CD8-positive, alpha-beta T cell (primary cell): ENCODE measurements at regions of chr22 and their contacts with region 1.

Region 1: GRCh38 chr22:36301384-36301828 is 48.5 kb downstream of the APOL1 start:
- DNase-seq: peak; percentile 67 to 92 (median 85)
- ATAC-seq: peak; percentile 94
- H3K4me3 ChIP-seq: no peak overlapping the region
- H3K4me3 Mint-ChIP-seq: no peak overlapping the region
- H3K27ac ChIP-seq: peak overlapping the region in 1 of 2 experiments; percentile 34
- H3K27ac Mint-ChIP-seq: peak overlapping the region; percentile 82
- H3K4me1 ChIP-seq: peaks cover 6% of the 10 kb centered on the region
- H3K4me1 Mint-ChIP-seq: peaks cover 9% of the 10 kb centered on the region
- H3K27me3 ChIP-seq: no peaks in the 10 kb centered on the region
- H3K27me3 Mint-ChIP-seq: no peaks in the 10 kb centered on the region
- CTCF ChIP-seq: peak; percentile 89

Region 2: GRCh38 chr22:36239401-36240171 is 61.8 kb before region 1 on chr22 and contains the start of gene APOL2:
- CTCF ChIA-PET with region 1: interaction called, 16 read pairs
- POLR2A ChIA-PET with region 1: no interaction called
- intact Hi-C with region 1: no loop called
- DNase-seq: peak; percentile 59 to 94 (median 87)
- ATAC-seq: peak; percentile 97
- H3K4me3 ChIP-seq: peak within 1 kb of the TSS; percentile 81 to 89
- H3K4me3 Mint-ChIP-seq: peak within 1 kb of the TSS; percentile 95
- H3K27ac ChIP-seq: peak within 1 kb of the TSS; percentile 69 to 92
- H3K27ac Mint-ChIP-seq: peak within 1 kb of the TSS; percentile 96
- H3K4me1 ChIP-seq: peaks cover 38% of the 10 kb centered on the region
- H3K4me1 Mint-ChIP-seq: peaks cover 50% of the 10 kb centered on the region
- H3K27me3 ChIP-seq: no peaks in the 10 kb centered on the region
- H3K27me3 Mint-ChIP-seq: no peaks in the 10 kb centered on the region
- CTCF ChIP-seq: peak; percentile 69
- total RNA-seq, gene APOL2: 17.4 to 18.2 TPM

Region 3: GRCh38 chr22:36286471-36287224 is 14.8 kb before region 1 on chr22:
- CTCF ChIA-PET with region 1: interaction called, 29 read pairs
- POLR2A ChIA-PET with region 1: interaction called, 3 read pairs
- intact Hi-C with region 1: no loop called
- DNase-seq: peak; percentile 38 to 81 (median 70)
- ATAC-seq: peak; percentile 71
- H3K4me3 ChIP-seq: no peak overlapping the region
- H3K4me3 Mint-ChIP-seq: no peak overlapping the region
- H3K27ac ChIP-seq: peak overlapping the region; percentile 10 to 26
- H3K27ac Mint-ChIP-seq: peak overlapping the region; percentile 82
- H3K4me1 ChIP-seq: peaks cover 35% of the 10 kb centered on the region
- H3K4me1 Mint-ChIP-seq: peaks cover 33% of the 10 kb centered on the region
- H3K27me3 ChIP-seq: no peaks in the 10 kb centered on the region
- H3K27me3 Mint-ChIP-seq: no peaks in the 10 kb centered on the region
- CTCF ChIP-seq: peak; percentile 84

Region 4: GRCh38 chr22:36317658-36318271 is 16.4 kb after region 1 on chr22:
- CTCF ChIA-PET with region 1: interaction called, 76 read pairs
- POLR2A ChIA-PET with region 1: interaction called, 3 read pairs
- intact Hi-C with region 1: no loop called
- DNase-seq: peak in 1 of 9 experiments; percentile 16
- ATAC-seq: no peak
- H3K4me3 ChIP-seq: no peak overlapping the region
- H3K4me3 Mint-ChIP-seq: no peak overlapping the region
- H3K27ac ChIP-seq: no peak overlapping the region
- H3K27ac Mint-ChIP-seq: no peak overlapping the region
- H3K4me1 ChIP-seq: no peaks in the 10 kb centered on the region
- H3K4me1 Mint-ChIP-seq: peaks cover 3% of the 10 kb centered on the region
- H3K27me3 ChIP-seq: no peaks in the 10 kb centered on the region
- H3K27me3 Mint-ChIP-seq: no peaks in the 10 kb centered on the region
- CTCF ChIP-seq: no peak

Region 5: DNA sequence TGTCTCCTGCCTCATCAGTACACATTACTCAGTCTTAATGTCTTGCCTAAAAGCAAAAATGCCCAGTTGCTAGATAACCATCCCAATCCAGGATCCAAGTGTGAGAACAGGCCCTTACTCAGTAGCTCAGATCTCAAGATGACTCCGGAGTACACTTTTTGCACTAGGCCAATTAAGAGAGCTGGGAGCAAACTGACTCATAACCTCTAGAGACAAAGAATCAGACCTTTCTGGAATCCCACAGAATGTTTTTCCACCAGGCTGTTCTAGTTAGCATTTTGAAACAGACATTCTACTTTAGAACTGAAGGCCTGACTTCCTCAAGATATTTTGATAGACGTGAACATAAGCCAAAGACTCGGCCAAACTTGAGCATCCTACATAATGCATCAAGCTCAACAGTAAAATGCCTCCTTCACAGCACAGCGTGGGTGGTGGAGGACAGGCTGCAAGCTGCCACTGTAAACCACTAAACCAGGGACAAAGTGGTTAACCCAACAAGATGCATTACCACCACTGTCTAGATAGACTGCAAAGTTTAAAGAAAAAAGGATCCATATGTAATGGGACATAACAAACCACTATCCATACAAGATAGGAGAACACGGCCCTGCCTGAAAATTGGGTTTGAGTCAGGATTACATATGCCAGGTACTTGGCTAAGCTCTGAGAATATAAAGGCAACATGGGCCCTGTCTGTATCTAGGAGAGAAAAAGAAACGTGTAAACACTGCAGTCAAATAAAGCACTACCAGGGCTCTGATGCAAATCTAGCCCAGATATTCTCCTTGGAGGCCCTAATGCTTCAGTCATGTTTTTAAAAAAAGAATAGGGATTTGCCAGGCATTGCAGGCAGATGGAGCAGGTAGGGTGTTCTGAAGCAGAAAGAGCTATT is 38.0 kb after region 1 on chr22:
- CTCF ChIA-PET with region 1: interaction called, 39 read pairs
- POLR2A ChIA-PET with region 1: no interaction called
- intact Hi-C with region 1: no loop called
- DNase-seq: peak in 2 of 9 experiments; percentile 44 to 50
- ATAC-seq: peak; percentile 12
- H3K4me3 ChIP-seq: no peak overlapping the region
- H3K4me3 Mint-ChIP-seq: peak overlapping the region; percentile 64
- H3K27ac ChIP-seq: peak overlapping the region in 1 of 2 experiments; percentile 55
- H3K27ac Mint-ChIP-seq: peak overlapping the region; percentile 92
- H3K4me1 ChIP-seq: peaks cover 98% of the 10 kb centered on the region
- H3K4me1 Mint-ChIP-seq: peaks cover 92% of the 10 kb centered on the region
- H3K27me3 ChIP-seq: no peaks in the 10 kb centered on the region
- H3K27me3 Mint-ChIP-seq: no peaks in the 10 kb centered on the region
- CTCF ChIP-seq: no peak

Region 6: DNA sequence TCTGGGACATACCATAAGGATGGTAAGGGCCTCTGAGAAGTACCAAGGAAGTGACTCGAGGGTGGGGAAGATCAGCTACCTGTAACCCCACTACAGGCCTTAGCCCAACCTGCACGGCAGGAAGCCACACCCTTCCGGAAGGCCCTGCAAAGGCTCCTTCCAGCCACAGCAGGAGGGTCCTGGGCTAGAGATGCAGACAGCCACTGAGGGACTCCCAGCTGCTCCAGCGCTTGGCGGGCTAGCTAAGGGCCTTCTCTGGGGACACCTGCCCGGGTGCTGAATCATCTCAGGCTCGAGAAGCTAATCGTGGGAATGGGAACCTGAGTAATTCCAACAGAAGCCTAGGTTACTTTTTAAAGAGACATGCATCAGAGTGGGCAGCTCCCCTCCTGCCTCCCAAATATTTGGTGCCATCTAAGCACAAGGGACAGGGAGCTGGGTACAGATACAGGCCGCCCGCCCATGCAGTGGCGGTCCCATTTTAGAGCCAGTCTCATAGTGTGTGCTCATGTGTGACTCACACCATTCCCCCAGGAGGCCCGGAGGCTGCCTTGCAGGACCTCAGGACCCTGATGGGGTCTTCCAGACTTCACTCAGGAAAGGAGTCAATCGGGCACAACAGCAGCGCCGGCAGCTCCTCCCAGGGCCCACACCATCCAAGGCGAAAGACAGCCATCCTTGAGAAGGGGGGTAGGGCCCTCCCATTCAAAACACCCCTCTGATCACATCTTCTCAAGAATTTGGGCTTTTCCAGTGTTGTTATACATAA is 78.4 kb after region 1 on chr22:
- CTCF ChIA-PET with region 1: interaction called, 20 read pairs
- POLR2A ChIA-PET with region 1: interaction called, 4 read pairs
- intact Hi-C with region 1: no loop called
- DNase-seq: peak in 7 of 9 experiments; percentile 58 to 81 (median 73)
- ATAC-seq: peak; percentile 33
- H3K4me3 ChIP-seq: peak overlapping the region; percentile 21 to 35
- H3K4me3 Mint-ChIP-seq: peak overlapping the region; percentile 79
- H3K27ac ChIP-seq: peak overlapping the region; percentile 70 to 85
- H3K27ac Mint-ChIP-seq: peak overlapping the region; percentile 99
- H3K4me1 ChIP-seq: peaks cover 89% of the 10 kb centered on the region
- H3K4me1 Mint-ChIP-seq: peaks cover 82% of the 10 kb centered on the region
- H3K27me3 ChIP-seq: no peaks in the 10 kb centered on the region
- H3K27me3 Mint-ChIP-seq: no peaks in the 10 kb centered on the region
- CTCF ChIP-seq: no peak

Region 7: GRCh38 chr22:36470162-36470993 is 169.0 kb after region 1 on chr22:
- CTCF ChIA-PET with region 1: interaction called, 227 read pairs
- POLR2A ChIA-PET with region 1: interaction called, 7 read pairs
- intact Hi-C with region 1: loop called (anchors 1 kb)
- DNase-seq: peak; percentile 71 to 91 (median 82)
- ATAC-seq: peak; percentile 98
- H3K4me3 ChIP-seq: no peak overlapping the region
- H3K4me3 Mint-ChIP-seq: no peak overlapping the region
- H3K27ac ChIP-seq: no peak overlapping the region
- H3K27ac Mint-ChIP-seq: peak overlapping the region; percentile 75
- H3K4me1 ChIP-seq: peaks cover 14% of the 10 kb centered on the region
- H3K4me1 Mint-ChIP-seq: peaks cover 18% of the 10 kb centered on the region
- H3K27me3 ChIP-seq: no peaks in the 10 kb centered on the region
- H3K27me3 Mint-ChIP-seq: no peaks in the 10 kb centered on the region
- CTCF ChIP-seq: peak; percentile 88